Activated CD8-positive, alpha-beta memory T cell treated with anti-CD3 and anti-CD28 coated beads, Interleukin-2, amount 10 ng/mL, durations not matched to agents 7 days and 5 days (primary cell): ENCODE measurements at regions of chr2 and their contacts with region 1.

Region 1: GRCh38 chr2:96536445-96537065 is at the start of gene ARID5A:
- DNase-seq: peak; percentile 95
- ATAC-seq: peak; percentile 73
- H3K4me3 Mint-ChIP-seq: peak within 1 kb of the TSS; percentile 90
- H3K27ac Mint-ChIP-seq: peak within 1 kb of the TSS; percentile 94
- H3K4me1 Mint-ChIP-seq: peaks cover 70% of the 10 kb centered on the region
- H3K27me3 Mint-ChIP-seq: no peaks in the 10 kb centered on the region
- total RNA-seq, gene ARID5A: 57.9 to 70.5 TPM

Region 2: GRCh38 chr2:96463119-96463518 is 73.4 kb before region 1 on chr2:
- CTCF ChIA-PET with region 1: no interaction called
- DNase-seq: no peak
- ATAC-seq: no peak
- H3K4me3 Mint-ChIP-seq: no peak overlapping the region
- H3K27ac Mint-ChIP-seq: no peak overlapping the region
- H3K4me1 Mint-ChIP-seq: no peaks in the 10 kb centered on the region
- H3K27me3 Mint-ChIP-seq: peaks cover 6% of the 10 kb centered on the region

Region 3: GRCh38 chr2:96594691-96595152 is 58.2 kb after region 1 on chr2:
- CTCF ChIA-PET with region 1: interaction called, 10 read pairs
- DNase-seq: peak; percentile 74
- ATAC-seq: peak; percentile 92
- H3K4me3 Mint-ChIP-seq: peak overlapping the region; percentile 15
- H3K27ac Mint-ChIP-seq: peak overlapping the region; percentile 94
- H3K4me1 Mint-ChIP-seq: peaks cover 63% of the 10 kb centered on the region
- H3K27me3 Mint-ChIP-seq: no peaks in the 10 kb centered on the region